AG04450 (cell line): ENCODE measurements at regions of chr16 and their contacts with region 1.

Region 1: DNA sequence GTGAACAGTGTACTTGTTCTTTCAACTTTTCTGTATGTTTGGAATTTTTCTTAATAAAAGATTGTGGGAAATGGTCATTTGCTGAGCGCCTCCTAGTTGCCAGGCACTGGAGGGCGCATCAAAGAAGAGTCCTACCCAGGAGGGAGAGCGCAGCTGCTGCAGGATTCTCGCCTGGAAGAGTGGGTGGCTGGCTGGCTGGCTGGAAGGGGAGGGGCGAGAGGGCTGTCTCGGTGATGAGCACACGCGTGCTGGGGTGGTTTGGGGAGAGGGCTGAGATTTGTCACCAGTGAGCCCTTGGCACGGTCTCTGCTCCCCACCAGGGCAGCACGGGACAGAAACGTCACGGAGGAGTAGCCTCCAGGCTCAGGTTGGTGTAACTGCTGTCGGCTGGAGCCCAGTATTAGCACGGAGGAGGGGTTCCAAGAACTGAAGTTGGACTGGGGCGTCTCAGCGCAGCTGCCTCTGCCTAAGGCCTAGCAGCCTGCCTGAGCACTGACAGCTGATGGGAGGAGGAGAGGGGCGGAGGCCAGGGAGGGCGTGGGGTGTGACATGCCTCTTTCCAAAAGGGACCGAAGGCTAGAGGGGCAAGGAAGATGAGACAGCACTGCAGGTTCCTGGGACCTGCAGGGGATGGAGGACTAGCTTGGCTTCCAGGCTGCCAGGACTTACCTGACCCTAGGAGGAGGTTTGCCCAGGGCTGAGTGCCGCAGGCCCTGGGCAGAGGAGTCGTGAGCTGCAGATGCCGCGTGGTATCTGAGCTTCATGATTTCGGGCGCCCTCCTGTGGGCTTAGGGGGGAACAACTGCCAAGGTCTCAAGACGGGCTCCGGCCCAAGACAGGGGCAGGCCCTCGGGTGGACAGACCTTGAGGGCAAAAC is 5.7 kb downstream of the LDHD start:
- DNase-seq: peak; percentile 72
- H3K4me3 ChIP-seq: peak overlapping the region; percentile 45
- H3K27ac ChIP-seq: peak overlapping the region; percentile 84
- H3K27me3 ChIP-seq: no peaks in the 10 kb centered on the region
- CTCF ChIP-seq: peak; percentile 90

Region 2: DNA sequence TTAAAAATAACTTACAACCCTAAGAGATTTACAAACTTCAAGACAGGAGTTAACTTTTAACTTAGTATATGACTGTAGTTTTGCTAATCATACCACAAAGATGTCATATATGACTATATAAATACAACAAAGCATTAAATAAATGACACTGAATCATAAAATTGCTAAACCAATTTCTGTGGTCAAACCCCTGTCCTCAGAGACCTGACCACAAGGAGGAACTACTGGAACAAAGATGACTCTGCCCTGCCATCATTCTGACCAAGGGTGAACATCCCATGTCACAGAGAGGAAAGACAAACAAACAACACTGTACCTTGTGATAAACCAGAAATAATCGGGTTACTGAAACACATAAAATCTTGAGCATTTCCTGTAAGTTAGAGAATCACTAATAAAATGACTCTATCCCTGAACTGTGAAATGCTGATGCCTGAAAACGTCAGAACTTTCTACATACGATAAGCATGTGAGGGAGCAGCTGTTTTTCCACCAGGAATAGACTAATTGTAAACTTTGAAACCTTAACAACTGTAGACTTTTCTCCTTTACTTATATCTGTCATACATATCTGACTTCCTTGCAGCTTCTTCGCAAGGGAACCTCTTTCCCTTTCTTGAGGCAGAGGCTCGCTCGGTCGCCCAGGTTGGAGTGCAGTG is 173.8 kb before region 1 on chr16:
- CTCF ChIA-PET with region 1: interaction called, 16 read pairs
- POLR2A ChIA-PET with region 1: no interaction called
- DNase-seq: peak; percentile 15
- H3K4me3 ChIP-seq: no peak overlapping the region
- H3K27ac ChIP-seq: no peak overlapping the region
- H3K27me3 ChIP-seq: no peaks in the 10 kb centered on the region
- CTCF ChIP-seq: no peak

Region 3: GRCh38 chr16:74998481-74999218 is 112.2 kb before region 1 on chr16 and contains the start of gene ZNRF1:
- CTCF ChIA-PET with region 1: interaction called, 144 read pairs
- POLR2A ChIA-PET with region 1: interaction called, 16 read pairs
- DNase-seq: peak; percentile 24
- H3K4me3 ChIP-seq: peak within 1 kb of the TSS; percentile 92
- H3K27ac ChIP-seq: peak within 1 kb of the TSS; percentile 11
- H3K27me3 ChIP-seq: no peaks in the 10 kb centered on the region
- CTCF ChIP-seq: peak; percentile 72
- polyA plus RNA-seq, gene ZNRF1: 31.6 and 36.5 TPM in 2 replicates

Region 4: GRCh38 chr16:75025761-75026160 is 85.1 kb before region 1 on chr16:
- CTCF ChIA-PET with region 1: interaction called, 13 read pairs
- POLR2A ChIA-PET with region 1: no interaction called
- DNase-seq: no peak
- H3K4me3 ChIP-seq: no peak overlapping the region
- H3K27ac ChIP-seq: peak overlapping the region; percentile 85
- H3K27me3 ChIP-seq: no peaks in the 10 kb centered on the region
- CTCF ChIP-seq: no peak

Region 5: DNA sequence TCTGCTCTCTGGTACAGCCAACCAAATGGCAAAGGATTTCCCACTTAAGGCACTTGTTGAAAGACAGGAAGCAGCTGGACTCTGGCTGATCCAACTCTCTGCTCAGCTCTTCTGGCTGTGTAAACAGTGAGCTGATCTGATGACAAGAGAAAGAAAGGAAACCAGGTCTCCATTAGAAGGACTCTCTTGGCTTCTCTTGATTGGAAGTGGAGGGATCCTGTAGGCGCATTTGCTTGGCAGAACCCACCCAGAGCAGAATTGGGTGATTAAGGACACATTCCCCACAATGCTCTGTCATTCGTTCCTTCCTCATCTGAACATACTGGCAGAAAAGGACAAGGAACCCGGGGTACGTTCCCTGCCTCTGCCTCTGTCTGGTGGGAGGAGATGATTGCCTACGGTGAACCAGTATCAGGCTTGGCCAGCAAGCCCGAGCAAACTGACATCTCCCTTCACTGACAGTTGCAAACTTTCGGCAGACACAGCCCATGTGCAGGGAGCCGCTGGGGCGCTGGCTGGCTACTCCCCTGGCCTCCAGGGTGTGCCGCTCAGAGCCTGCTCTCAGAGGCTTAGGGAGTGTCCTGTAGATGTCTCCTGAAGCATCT is 23.4 kb before region 1 on chr16:
- CTCF ChIA-PET with region 1: interaction called, 22 read pairs
- POLR2A ChIA-PET with region 1: interaction called, 8 read pairs
- DNase-seq: peak; percentile 87
- H3K4me3 ChIP-seq: peak overlapping the region; percentile 46
- H3K27ac ChIP-seq: peak overlapping the region; percentile 97
- H3K27me3 ChIP-seq: no peaks in the 10 kb centered on the region
- CTCF ChIP-seq: no peak

Region 6: DNA sequence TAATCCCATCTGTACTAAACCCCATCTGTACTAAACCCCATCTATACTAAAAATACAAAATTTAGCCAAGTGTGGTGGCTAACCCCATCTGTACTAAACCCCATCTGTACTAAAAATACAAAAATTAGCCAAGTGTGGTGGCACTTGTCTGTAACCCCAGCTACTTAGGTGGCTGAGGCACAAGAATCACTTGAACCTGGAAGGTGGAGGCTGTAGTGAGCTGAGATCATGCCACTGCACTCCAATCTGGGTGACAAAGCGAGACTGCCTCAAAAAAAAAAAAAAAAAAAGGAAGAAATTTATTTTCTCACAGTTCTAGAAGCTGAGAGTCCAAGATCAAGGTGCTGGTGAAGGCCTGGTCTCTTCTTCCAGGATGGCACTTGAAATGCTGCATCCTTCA is 49.5 kb after region 1 on chr16:
- CTCF ChIA-PET with region 1: no interaction called
- POLR2A ChIA-PET with region 1: no interaction called
- DNase-seq: no peak
- H3K4me3 ChIP-seq: no peak overlapping the region
- H3K27ac ChIP-seq: no peak overlapping the region
- H3K27me3 ChIP-seq: no peaks in the 10 kb centered on the region
- CTCF ChIP-seq: no peak

Region 7: GRCh38 chr16:75192601-75193297 is 81.9 kb after region 1 on chr16:
- CTCF ChIA-PET with region 1: no interaction called
- POLR2A ChIA-PET with region 1: no interaction called
- DNase-seq: no peak
- H3K4me3 ChIP-seq: no peak overlapping the region
- H3K27ac ChIP-seq: no peak overlapping the region
- H3K27me3 ChIP-seq: peaks cover 13% of the 10 kb centered on the region
- CTCF ChIP-seq: no peak

Region 8: GRCh38 chr16:75432828-75433731 is 322.2 kb after region 1 on chr16 and contains the start of gene CFDP1:
- CTCF ChIA-PET with region 1: no interaction called
- POLR2A ChIA-PET with region 1: no interaction called
- DNase-seq: peak; percentile 82
- H3K4me3 ChIP-seq: peak within 1 kb of the TSS; percentile 89
- H3K27ac ChIP-seq: peak within 1 kb of the TSS; percentile 96
- H3K27me3 ChIP-seq: no peaks in the 10 kb centered on the region
- CTCF ChIP-seq: no peak
- polyA plus RNA-seq, gene CFDP1: 64.0 and 81.6 TPM in 2 replicates